Activated CD4-positive, alpha-beta memory T cell treated with anti-CD3 and anti-CD28 coated beads, Interleukin-2, amount 10 ng/mL, durations not matched to agents 7 days and 5 days (primary cell): ENCODE measurements at regions of chr19 and their contacts with region 1.

Region 1: GRCh38 chr19:861763-862580 is 2.5 kb downstream of the CFD start:
- DNase-seq: peak; percentile 78
- H3K4me3 Mint-ChIP-seq: no peak overlapping the region
- H3K27ac Mint-ChIP-seq: peak overlapping the region; percentile 55
- H3K4me1 Mint-ChIP-seq: peaks cover 24% of the 10 kb centered on the region
- H3K27me3 Mint-ChIP-seq: peaks cover 12% of the 10 kb centered on the region

Region 2: DNA sequence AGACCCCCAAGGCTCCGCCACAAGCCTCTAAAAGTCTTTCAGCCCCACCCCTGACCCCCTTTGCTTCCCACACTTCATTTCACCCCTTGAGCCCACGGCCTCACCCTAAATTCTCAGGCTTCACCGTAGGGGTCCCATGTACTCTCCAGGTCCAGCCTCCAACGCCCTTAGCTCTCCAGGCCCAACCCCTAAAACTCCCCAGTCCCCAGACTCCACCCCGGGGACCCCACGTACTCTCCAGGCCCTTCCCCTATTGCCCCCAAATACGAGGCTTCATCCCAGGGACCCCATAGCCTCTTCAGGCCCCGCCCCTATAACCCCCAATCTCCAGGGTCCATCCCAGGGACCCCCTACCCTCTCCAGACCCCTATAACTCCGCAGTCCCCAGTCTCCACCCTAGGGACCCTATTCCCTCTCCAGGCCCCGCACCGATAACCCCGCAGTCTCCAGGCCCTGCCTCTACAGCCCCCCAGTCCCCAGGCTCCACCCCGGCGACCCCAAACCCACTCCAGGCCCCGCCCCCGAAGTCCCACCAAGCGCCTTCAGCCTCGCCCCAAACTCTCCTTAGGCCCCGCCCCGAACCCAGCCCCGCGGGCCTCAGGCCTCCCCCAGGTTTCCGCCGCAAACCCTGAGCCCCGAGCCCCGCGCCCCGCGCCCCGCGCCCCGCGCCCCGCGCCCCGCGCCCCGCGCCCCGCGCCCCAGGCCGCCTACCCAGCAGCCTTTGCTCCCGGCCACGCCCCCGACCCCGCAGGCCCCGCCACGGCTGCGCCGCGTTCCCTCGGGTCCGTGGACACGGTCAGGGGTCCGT is 30.5 kb after region 1 on chr19:
- CTCF ChIA-PET with region 1: interaction called, 9 read pairs
- POLR2A ChIA-PET with region 1: interaction called, 11 read pairs
- DNase-seq: no peak
- H3K4me3 Mint-ChIP-seq: peak overlapping the region; percentile 82
- H3K27ac Mint-ChIP-seq: peak overlapping the region; percentile 78
- H3K4me1 Mint-ChIP-seq: peaks cover 19% of the 10 kb centered on the region
- H3K27me3 Mint-ChIP-seq: no peaks in the 10 kb centered on the region

Region 3: DNA sequence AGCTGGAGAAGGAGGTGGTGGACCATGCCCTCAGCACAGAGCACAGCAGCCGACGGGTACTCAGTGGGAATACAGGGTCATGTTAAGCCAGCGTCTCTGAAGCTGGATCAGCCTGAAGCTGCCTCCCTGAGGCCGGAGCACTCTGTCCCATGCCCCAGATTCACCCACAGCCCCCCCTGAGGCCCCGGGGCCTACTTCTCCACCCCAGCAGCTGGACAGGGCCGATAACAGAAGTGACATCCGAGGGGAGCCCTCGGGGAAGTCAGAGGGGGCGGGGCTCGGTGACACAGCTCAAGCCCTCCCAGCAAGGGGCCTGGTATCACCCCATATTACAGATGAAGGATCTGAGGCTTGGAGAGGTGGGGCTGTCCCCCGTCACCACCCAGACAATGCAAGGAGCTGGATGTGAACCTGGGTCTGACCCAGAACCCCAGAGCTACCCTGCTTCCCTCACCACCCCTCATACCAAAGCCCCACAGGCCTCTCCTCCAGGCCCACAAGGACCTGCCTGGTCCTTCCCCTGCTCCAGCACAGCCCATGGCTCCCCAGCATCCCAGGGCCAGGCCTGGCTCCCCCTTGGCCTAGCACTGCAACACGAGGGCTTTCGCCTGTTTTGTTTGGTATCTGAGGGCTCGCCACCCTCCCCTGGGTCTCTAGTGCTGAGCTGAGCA is 45.3 kb after region 1 on chr19:
- CTCF ChIA-PET with region 1: interaction called, 25 read pairs
- POLR2A ChIA-PET with region 1: interaction called, 15 read pairs
- DNase-seq: no peak
- H3K4me3 Mint-ChIP-seq: no peak overlapping the region
- H3K27ac Mint-ChIP-seq: peak overlapping the region; percentile 98
- H3K4me1 Mint-ChIP-seq: peaks cover 57% of the 10 kb centered on the region
- H3K27me3 Mint-ChIP-seq: no peaks in the 10 kb centered on the region

Region 4: DNA sequence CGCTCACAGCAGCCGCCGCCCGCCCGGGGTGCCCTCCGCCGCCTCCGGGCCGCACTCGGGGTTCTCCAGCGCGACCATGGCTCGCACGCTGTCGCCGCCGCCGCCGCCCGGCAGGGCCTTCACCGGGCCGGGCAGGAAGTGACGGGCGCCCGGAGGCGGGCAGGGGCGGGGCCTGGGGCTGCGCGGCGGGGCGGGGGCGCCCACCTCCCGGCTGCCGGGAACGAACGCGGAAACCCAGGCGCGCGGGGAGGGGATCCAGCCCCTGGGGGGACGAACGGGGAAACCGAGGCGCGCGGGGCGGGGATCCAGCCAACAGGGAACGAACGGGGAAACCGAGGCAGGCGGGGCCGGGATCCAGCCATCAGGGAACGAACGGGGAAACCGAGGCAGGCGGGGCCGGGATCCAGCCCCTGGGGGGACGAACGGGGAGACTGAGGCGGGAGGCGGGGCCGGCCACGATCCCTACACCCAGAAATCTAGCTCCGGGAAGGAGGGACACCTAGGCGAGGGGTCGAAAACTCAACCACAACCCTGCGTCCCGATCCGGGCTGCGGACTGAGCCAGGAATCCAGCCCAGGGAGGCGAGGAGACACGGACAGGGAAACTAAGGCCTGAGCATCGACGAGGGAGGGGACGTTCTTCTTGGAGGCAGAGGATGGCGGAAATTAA is 51.2 kb after region 1 on chr19 and contains the start of gene R3HDM4:
- CTCF ChIA-PET with region 1: interaction called, 37 read pairs
- POLR2A ChIA-PET with region 1: interaction called, 15 read pairs
- DNase-seq: peak; percentile 86
- H3K4me3 Mint-ChIP-seq: peak within 1 kb of the TSS; percentile 80
- H3K27ac Mint-ChIP-seq: peak within 1 kb of the TSS; percentile 86
- H3K4me1 Mint-ChIP-seq: peaks cover 34% of the 10 kb centered on the region
- H3K27me3 Mint-ChIP-seq: peaks cover 5% of the 10 kb centered on the region
- total RNA-seq, gene R3HDM4: 111 to 116 TPM

Region 5: DNA sequence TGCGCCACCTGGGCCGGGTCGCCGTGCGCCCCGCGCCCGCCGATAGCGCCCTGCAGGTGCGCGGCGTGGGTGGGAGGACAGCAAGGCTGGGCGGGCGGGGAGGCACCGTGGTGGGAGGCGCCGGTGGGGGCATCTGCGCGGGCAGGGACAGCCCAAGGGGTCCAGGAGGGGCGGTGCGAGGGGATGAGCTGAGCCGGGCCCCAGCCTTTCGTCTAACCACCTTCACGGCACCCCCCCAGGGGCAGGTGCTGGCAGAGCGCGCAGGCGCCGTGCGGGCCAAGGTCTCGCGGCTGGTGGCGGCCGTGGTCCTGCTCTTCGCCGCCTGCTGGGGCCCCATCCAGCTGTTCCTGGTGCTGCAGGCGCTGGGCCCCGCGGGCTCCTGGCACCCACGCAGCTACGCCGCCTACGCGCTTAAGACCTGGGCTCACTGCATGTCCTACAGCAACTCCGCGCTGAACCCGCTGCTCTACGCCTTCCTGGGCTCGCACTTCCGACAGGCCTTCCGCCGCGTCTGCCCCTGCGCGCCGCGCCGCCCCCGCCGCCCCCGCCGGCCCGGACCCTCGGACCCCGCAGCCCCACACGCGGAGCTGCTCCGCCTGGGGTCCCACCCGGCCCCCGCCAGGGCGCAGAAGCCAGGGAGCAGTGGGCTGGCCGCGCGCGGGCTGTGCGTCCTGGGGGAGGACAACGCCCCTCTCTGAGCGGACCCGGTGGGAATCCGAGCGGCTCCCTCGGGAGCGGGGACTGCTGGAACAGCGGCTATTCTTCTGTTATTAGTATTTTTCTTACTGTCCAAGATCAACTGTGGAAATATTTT is 58.3 kb after region 1 on chr19:
- CTCF ChIA-PET with region 1: interaction called, 37 read pairs
- POLR2A ChIA-PET with region 1: interaction called, 17 read pairs
- DNase-seq: peak; percentile 56
- H3K4me3 Mint-ChIP-seq: peak overlapping the region; percentile 73
- H3K27ac Mint-ChIP-seq: peak overlapping the region; percentile 65
- H3K4me1 Mint-ChIP-seq: peaks cover 31% of the 10 kb centered on the region
- H3K27me3 Mint-ChIP-seq: peaks cover 8% of the 10 kb centered on the region

Region 6: DNA sequence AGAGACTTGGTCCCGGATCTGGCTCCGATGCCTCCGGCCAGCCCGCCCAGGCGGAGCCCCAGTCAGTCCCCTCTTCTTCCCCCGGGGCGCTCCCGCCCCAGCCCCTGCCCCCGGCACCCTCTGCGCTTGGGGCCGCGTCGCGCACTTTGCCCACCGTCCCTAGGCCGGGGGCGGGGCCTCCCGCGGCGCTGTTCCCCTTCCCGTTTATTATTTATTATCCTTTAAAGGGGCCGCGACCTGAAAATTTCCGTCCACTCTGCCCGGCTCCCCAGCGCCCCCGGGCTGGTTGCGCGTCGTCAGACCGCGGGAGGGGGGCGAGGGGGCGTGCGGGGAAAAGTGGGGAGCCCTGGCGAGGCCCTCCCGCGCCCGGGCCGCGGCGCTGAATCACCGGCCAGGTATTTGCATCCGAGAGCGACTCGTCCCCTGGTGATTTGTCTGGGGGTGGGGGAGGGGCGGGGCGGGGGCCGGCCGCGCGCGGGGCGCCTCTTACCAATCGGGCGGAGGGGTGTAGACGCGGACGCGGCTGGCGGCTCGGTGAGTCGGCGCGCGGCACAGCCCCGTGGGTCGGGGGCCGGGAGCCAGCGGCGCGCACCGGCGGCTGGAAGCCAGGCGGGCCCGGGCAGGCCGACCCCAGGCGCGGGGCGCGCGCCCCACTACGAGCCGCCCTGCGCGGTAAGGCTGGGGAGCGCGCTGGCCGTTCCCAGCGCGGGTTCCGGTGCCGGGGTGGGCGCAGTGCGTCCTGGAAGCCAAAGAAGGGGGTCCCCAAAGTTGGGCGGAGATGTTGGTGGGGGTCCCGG is 63.8 kb after region 1 on chr19 and contains the start of gene ARID3A:
- CTCF ChIA-PET with region 1: interaction called, 37 read pairs
- POLR2A ChIA-PET with region 1: interaction called, 17 read pairs
- DNase-seq: peak; percentile 80
- H3K4me3 Mint-ChIP-seq: peak within 1 kb of the TSS; percentile 78
- H3K27ac Mint-ChIP-seq: peak within 1 kb of the TSS; percentile 73
- H3K4me1 Mint-ChIP-seq: peaks cover 18% of the 10 kb centered on the region
- H3K27me3 Mint-ChIP-seq: peaks cover 3% of the 10 kb centered on the region
- total RNA-seq, gene ARID3A: 32.4 to 34.0 TPM

Region 7: DNA sequence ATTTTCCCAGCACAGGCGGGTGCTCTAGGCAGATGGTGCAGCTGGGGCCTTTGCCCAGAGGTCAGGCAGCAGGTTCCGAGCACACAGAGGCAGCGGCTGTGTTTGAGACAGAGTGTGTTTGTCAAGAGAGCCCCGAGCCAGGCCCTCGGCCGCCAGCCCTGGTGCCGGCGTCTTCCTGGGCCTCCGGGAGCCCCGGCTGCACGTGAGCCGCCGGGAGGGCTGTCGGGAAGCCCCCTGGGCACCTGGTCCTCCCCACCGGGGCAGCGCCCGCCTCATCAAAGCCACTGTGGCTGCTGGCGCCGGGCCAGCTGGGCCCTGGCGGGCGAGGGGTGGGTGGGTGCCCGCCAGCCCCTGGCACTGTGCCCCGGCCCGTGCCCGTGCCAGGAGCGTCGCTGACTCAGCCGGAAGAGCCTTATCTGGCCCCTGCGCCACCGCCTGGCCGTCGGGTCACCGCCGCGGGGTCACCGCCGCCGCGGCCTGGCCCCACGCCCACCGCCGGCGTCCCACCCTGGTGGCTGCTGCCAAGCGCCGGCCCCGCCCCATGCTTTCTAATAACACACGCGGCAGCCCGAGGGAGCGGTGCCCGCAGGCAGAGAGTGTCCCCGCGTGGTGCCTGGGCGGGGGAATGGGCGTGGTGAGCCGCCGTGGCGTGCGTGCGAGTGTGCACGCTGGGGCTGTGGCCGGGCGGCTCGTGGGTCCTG is 78.8 kb after region 1 on chr19:
- CTCF ChIA-PET with region 1: no interaction called
- POLR2A ChIA-PET with region 1: no interaction called
- DNase-seq: peak; percentile 67
- H3K4me3 Mint-ChIP-seq: peak overlapping the region; percentile 69
- H3K27ac Mint-ChIP-seq: peak overlapping the region; percentile 60
- H3K4me1 Mint-ChIP-seq: peaks cover 32% of the 10 kb centered on the region
- H3K27me3 Mint-ChIP-seq: no peaks in the 10 kb centered on the region

Region 8: DNA sequence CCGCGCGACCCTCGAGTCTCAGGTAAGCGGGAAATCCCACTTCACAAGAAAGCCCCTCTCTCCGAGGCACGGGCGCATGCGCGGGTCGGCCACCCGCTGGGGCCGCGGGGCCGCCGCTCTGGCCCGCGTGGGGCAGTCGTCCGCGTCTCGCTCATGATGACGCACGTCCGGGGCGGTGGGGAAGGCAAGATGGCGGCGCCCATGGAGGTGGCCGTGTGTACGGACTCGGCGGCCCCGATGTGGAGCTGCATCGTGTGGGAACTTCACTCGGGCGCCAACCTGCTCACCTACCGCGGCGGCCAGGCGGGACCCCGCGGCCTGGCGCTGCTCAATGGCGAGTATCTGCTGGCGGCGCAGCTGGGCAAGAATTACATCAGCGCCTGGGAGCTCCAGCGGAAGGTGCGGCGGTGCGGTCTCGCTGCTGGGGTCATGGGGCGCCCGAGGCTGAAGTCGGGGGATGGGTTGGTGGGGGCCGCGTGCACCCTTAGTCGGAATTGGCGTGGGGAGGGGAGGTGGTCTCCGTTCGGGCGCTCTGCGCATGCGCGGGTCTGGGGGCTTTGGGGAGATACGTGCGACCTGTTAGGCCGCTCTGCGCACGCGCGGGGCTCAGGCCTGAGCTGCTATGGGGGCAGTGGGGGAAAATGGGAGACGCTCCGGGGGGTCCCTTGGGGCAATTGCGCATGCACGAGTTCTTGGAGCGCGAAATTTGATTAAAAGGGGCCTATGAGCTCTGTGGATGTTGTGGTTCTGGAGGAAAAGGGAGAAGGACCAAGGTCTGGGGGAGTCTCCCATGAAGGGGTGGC is 122.4 kb after region 1 on chr19 and contains the start of gene WDR18:
- CTCF ChIA-PET with region 1: interaction called, 34 read pairs
- POLR2A ChIA-PET with region 1: interaction called, 8 read pairs
- DNase-seq: peak; percentile 91
- H3K4me3 Mint-ChIP-seq: peak within 1 kb of the TSS; percentile 91
- H3K27ac Mint-ChIP-seq: peak within 1 kb of the TSS; percentile 83
- H3K4me1 Mint-ChIP-seq: peaks cover 22% of the 10 kb centered on the region
- H3K27me3 Mint-ChIP-seq: no peaks in the 10 kb centered on the region
- total RNA-seq, gene WDR18: 42.0 to 44.3 TPM